Right ventricle myocardium superior (tissue), 1 donor: ENCODE measurements at regions of chr20 and their contacts with region 1.

Region 1: GRCh38 chr20:62136283-62137091 is 6.7 kb downstream of the PSMA7 start:
- DNase-seq: peak; percentile 83
- ATAC-seq: peak; percentile 32

Region 2: GRCh38 chr20:62025832-62026563 is 110.5 kb before region 1 on chr20:
- intact Hi-C with region 1: loop called (anchors 5 kb)
- DNase-seq: peak; percentile 43
- ATAC-seq: peak; percentile 69